ENCODE measurements at regions of chr19 and their contacts with region 1.

Region 1: DNA sequence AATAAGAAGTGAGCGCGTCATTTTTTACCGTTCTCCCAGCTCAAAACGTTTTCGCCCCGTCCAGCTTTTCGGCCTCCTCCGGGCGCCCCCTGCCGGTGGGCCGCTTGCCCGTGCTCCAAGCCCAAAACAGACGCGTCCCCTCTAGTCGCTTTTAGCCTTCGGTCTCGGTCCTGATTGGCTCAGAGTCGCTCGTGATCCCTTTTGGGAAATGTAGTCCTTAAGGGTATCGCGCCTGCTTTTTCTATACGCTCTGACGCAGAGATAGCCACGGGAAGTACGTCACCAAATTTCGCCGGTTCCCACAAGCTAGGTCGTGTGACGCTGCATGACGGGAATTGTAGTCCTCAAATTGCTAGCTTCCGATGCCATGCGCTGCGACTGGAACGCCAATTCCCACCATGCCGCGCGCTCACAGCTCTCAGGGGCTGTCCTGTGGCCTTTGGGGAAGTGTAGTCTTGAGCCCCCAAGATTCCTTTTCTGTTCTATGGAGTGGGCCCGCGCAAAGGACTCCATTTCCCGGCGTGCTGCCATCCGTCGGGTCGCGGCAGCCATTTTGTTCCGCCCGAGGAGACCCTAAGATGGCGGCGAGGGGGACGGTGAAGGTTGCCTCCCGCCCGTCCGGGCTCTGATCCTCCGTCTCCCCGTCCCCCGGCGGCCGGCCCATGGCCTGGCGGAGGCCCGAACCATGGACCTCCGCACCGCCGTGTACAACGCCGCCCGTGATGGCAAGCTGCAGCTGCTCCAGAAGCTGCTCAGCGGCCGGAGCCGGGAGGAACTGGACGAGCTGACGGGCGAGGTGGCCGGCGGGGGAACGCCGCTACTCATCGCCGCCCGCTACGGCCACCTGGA is at the start of gene FEM1A:
- DNase-seq: peak; percentile 100
- H3K4me3 ChIP-seq: peak within 1 kb of the TSS; percentile 80
- H3K27ac ChIP-seq: peak within 1 kb of the TSS; percentile 93
- H3K4me1 ChIP-seq: peaks cover 21% of the 10 kb centered on the region
- H3K27me3 ChIP-seq: no peaks in the 10 kb centered on the region
- CTCF ChIP-seq: peak; percentile 100
- total RNA-seq, gene FEM1A: 17.4 and 18.9 TPM in 2 replicates

Region 2: DNA sequence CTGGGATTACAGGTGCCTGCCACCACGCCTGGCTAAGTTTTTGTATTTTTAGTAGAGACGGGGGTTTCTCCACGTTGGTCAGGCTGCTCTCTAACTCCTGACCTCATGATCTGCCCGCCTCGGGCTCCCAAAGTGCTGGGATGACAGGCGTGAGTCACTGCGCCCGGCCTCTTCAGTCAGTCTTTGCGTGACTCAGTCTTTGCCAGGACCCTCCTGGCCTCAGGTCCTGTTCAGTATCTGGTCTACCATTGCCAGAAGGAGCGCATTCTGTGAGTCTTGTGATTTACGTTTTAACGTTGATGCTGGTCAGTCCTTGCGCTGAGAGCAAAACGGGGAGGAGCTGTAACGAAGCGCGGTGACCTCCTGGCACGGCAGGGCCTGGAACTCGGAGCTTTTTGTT is 1226.3 kb before region 1 on chr19:
- CTCF ChIA-PET with region 1: no interaction called
- POLR2A ChIA-PET with region 1: no interaction called
- intact Hi-C with region 1: no loop called
- DNase-seq: no peak
- H3K4me3 ChIP-seq: no peak overlapping the region
- H3K27ac ChIP-seq: no peak overlapping the region
- H3K4me1 ChIP-seq: no peaks in the 10 kb centered on the region
- H3K27me3 ChIP-seq: no peaks in the 10 kb centered on the region
- CTCF ChIP-seq: no peak

Region 3: DNA sequence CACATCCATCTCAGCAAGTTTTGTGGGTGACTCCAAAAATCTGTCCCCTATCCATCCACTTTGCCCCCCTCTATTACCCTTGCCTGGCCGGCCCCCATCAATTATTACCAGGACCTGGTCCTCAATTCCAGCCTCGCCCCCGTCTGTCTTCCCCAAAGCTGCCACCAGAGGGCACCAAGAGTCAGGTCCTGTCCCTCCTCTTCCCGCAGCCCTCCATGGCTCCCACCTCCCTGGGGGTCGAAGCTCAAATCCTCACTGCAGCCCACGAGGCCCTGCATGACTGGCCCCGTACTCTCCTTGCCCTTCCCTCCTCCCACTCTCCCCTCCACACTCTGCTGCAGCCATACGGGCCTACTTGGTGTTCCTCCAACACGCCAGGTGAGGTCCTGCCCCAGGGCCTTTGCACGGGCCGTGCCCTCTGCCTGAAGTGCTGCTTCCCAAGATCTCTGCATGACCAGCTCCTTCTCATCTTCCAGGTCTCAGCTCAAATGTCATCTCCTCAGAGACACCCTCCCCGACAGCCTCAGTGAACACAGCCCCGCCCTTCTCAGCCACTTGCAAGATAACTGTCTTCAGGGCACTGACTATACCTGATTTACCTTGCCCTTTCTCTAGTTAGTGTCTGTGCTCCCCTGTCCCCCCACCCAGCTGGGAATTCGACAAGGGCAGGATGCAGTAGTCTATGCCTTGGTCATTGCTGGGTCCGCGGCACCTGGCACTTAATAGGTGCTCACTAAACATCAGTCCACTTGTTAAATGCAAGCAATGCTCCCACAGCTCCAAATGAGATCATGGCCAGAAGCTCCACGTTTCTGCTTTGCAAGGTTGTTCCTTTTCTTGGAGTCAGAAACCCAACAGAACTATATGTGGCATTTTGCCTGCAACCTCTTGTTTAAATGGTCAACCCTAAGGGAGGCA is 215.1 kb before region 1 on chr19:
- CTCF ChIA-PET with region 1: no interaction called
- POLR2A ChIA-PET with region 1: no interaction called
- intact Hi-C with region 1: loop called (anchors 10 kb)
- DNase-seq: peak; percentile 59
- H3K4me3 ChIP-seq: no peak overlapping the region
- H3K27ac ChIP-seq: no peak overlapping the region
- H3K4me1 ChIP-seq: peaks cover 24% of the 10 kb centered on the region
- H3K27me3 ChIP-seq: peaks cover 9% of the 10 kb centered on the region
- CTCF ChIP-seq: peak; percentile 84

Region 4: GRCh38 chr19:4653793-4654436 is 137.5 kb before region 1 on chr19:
- CTCF ChIA-PET with region 1: no interaction called
- POLR2A ChIA-PET with region 1: interaction called, 18 read pairs
- intact Hi-C with region 1: no loop called
- DNase-seq: no peak
- H3K4me3 ChIP-seq: no peak overlapping the region
- H3K27ac ChIP-seq: no peak overlapping the region
- H3K4me1 ChIP-seq: no peaks in the 10 kb centered on the region
- H3K27me3 ChIP-seq: no peaks in the 10 kb centered on the region
- CTCF ChIP-seq: no peak

Region 5: GRCh38 chr19:4723367-4724187 is 67.8 kb before region 1 on chr19 and contains the start of gene DPP9:
- CTCF ChIA-PET with region 1: interaction called, 14 read pairs
- POLR2A ChIA-PET with region 1: no interaction called
- intact Hi-C with region 1: loop called (anchors 2 kb)
- DNase-seq: peak; percentile 99
- H3K4me3 ChIP-seq: peak within 1 kb of the TSS; percentile 98
- H3K27ac ChIP-seq: peak within 1 kb of the TSS; percentile 91
- H3K4me1 ChIP-seq: peaks cover 13% of the 10 kb centered on the region
- H3K27me3 ChIP-seq: no peaks in the 10 kb centered on the region
- CTCF ChIP-seq: no peak
- total RNA-seq, gene DPP9: 60.2 and 65.7 TPM in 2 replicates

Region 6: DNA sequence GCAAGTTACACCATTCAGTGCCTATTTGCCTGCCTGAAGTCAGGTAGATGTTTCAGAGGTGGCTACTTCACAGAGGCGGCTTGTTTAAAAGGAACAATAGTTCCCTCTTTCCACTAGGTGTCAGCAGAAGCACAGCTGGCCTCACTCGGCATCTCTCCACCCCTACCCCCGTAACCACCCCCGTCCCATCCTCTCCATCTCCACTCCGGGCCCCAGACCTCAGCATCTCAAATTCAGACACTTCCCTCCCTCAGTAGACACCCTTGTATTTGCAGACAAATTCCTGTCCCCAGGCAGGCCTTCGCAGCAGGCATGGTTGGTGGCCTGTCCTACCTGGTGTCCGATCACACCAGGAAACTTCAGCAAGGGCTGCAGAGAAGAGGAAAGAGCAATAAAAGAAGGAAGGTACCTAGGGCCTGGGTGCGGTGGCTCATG is 58.7 kb before region 1 on chr19:
- CTCF ChIA-PET with region 1: interaction called, 33 read pairs
- POLR2A ChIA-PET with region 1: no interaction called
- intact Hi-C with region 1: loop called (anchors 1 kb)
- DNase-seq: peak; percentile 83
- H3K4me3 ChIP-seq: no peak overlapping the region
- H3K27ac ChIP-seq: no peak overlapping the region
- H3K4me1 ChIP-seq: peaks cover 3% of the 10 kb centered on the region
- H3K27me3 ChIP-seq: no peaks in the 10 kb centered on the region
- CTCF ChIP-seq: peak; percentile 76

Region 7: DNA sequence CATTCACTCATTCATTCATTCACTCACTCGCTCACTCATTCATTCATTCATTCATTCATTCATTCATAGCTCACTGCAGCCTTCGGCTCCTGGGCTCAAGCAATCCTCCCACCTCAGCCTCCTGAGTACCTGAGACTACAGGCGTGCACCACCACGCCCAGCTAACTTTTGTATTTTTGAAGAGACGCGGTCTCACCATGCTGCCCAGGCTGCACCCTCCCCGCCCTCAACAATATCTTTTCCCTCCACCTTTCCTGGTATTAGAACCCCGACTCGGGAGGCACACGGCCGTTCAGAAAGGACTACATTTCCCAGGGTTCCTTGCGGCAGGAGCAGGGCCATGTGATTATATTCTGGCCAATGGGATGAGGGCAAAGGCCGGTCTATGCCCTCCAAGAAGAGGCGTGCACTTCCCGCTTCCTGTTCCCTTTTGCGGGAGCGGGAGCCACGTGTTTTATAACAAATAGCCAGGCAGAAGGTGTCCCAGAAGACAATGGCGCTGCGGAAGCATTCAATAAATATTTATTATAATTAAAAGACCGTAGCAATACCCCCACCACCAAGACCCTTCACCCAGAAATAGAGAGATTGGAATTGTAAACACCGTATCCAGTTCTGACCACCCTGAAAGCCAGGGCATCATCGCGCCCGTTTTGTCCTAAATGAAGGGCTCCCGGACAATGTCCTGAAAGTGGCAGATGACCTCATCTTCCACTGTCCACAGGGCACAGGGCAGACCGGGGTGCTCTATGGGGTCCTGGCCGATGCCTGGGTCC is 24.2 kb after region 1 on chr19:
- CTCF ChIA-PET with region 1: interaction called, 14 read pairs
- POLR2A ChIA-PET with region 1: no interaction called
- intact Hi-C with region 1: no loop called
- DNase-seq: peak; percentile 97
- H3K4me3 ChIP-seq: no peak overlapping the region
- H3K27ac ChIP-seq: no peak overlapping the region
- H3K4me1 ChIP-seq: peaks cover 5% of the 10 kb centered on the region
- H3K27me3 ChIP-seq: no peaks in the 10 kb centered on the region
- CTCF ChIP-seq: no peak

Region 8: DNA sequence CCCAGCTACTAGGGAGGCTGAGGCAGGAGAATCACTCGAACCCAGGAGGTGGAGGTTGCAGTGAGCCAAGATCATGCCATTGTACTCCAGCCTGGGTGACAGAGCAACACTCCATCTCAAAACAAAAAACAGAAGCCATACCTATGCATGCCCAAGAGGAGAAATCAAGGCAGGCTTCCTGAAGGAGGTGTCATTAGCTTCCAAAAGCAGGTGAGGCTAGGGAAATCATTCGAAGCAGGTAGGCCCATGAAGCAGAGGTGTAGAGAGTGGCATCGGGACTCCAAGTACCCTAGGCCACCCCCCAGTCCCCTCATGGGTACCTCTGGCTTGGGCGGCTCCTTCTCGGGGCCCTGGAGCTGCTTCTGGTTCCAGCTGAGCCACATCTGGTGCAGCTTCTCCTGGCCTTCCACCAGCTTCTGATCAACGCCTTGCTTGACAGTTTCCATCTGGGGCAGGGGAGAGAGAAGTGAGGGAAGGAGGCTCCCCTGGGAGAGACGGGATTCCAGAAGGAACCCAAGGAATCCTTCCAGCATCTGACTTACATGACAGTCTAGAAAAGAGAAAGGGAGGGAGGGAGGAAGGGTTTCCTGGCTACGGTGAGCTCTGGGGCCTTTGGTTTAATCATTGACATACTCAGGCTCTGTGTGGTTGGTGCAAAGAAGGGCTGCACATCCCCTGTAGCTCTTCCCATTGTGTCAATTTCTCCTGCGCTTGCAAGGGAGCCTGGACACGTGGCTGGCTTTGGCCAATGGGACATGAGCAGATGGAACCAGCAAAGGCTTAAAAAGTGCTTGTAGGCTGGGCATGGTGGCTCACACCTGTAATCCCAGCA is 53.2 kb after region 1 on chr19:
- CTCF ChIA-PET with region 1: interaction called, 13 read pairs
- POLR2A ChIA-PET with region 1: no interaction called
- intact Hi-C with region 1: no loop called
- DNase-seq: no peak
- H3K4me3 ChIP-seq: no peak overlapping the region
- H3K27ac ChIP-seq: no peak overlapping the region
- H3K4me1 ChIP-seq: no peaks in the 10 kb centered on the region
- H3K27me3 ChIP-seq: no peaks in the 10 kb centered on the region
- CTCF ChIP-seq: no peak

Region 9: GRCh38 chr19:4870025-4870700 is 78.8 kb after region 1 on chr19:
- CTCF ChIA-PET with region 1: no interaction called
- POLR2A ChIA-PET with region 1: no interaction called
- intact Hi-C with region 1: no loop called
- DNase-seq: peak; percentile 62
- H3K4me3 ChIP-seq: no peak overlapping the region
- H3K27ac ChIP-seq: no peak overlapping the region
- H3K4me1 ChIP-seq: peaks cover 9% of the 10 kb centered on the region
- H3K27me3 ChIP-seq: no peaks in the 10 kb centered on the region
- CTCF ChIP-seq: no peak

Measured in A673 (cell line).